ENCODE measurements at regions of chr7 and their contacts with region 1.

Region 1: DNA sequence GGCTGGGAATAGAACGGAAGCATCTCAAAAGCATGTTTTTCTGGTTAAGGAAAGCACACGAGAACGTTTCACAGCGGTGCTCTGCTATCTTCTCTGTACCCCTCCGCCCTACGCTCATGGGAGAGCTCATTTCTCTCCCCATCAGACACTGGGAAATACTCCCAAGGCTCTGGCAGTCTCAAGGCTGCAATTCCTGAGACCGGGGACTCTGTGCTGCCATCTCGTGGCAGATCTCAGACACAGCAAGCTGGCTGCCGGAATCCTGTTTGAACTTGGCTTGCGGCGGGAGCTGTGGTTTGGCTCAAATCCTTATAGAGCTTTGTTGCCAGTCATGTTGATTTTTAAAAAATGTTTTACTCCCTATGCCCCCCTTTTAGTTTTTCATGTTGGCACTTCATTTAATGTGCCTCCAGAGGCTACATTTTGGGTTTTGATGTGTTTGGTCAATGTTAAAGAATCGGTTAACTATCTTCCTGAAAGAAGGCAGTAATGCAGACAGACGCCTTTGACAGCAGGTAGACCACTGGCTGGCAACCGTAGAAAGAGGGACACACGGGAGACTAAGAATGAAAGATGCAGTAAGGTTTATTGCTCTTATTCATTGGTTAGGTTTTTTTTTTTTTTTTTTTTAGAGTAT is 27.6 kb downstream of the BMPER start:
- DNase-seq: peak in 1 of 2 donors; percentile 90
- H3K4me3 ChIP-seq: peak overlapping the region in 1 of 2 donors; percentile 13
- H3K27ac ChIP-seq: peak overlapping the region; percentile 4
- H3K4me1 ChIP-seq: peaks cover 17% of the 10 kb centered on the region
- H3K27me3 ChIP-seq: no peaks in the 10 kb centered on the region
- CTCF ChIP-seq: peak; percentile 83 to 94 (median 92)
- POLR2A ChIP-seq: no peak

Region 2: GRCh38 chr7:33774762-33775523 is 158.0 kb before region 1 on chr7:
- intact Hi-C with region 1: loop called (anchors 5 kb)
- DNase-seq: peak in 1 of 2 donors; percentile 72
- H3K4me3 ChIP-seq: no peak overlapping the region
- H3K27ac ChIP-seq: no peak overlapping the region
- H3K4me1 ChIP-seq: no peaks in the 10 kb centered on the region
- H3K27me3 ChIP-seq: no peaks in the 10 kb centered on the region
- CTCF ChIP-seq: no peak
- POLR2A ChIP-seq: no peak

Region 3: GRCh38 chr7:33904681-33905388 is 28.1 kb before region 1 on chr7:
- intact Hi-C with region 1: no loop called
- DNase-seq: no peak
- H3K4me3 ChIP-seq: peak overlapping the region; percentile 56 to 87
- H3K27ac ChIP-seq: peak overlapping the region; percentile 79
- H3K4me1 ChIP-seq: peaks cover 13% of the 10 kb centered on the region
- H3K27me3 ChIP-seq: no peaks in the 10 kb centered on the region
- CTCF ChIP-seq: no peak
- POLR2A ChIP-seq: no peak

Region 4: GRCh38 chr7:33986941-33987588 is 54.1 kb after region 1 on chr7:
- intact Hi-C with region 1: no loop called
- DNase-seq: no peak
- H3K4me3 ChIP-seq: no peak overlapping the region
- H3K27ac ChIP-seq: peak overlapping the region; percentile 73
- H3K4me1 ChIP-seq: no peaks in the 10 kb centered on the region
- H3K27me3 ChIP-seq: no peaks in the 10 kb centered on the region
- CTCF ChIP-seq: no peak
- POLR2A ChIP-seq: no peak

Region 5: DNA sequence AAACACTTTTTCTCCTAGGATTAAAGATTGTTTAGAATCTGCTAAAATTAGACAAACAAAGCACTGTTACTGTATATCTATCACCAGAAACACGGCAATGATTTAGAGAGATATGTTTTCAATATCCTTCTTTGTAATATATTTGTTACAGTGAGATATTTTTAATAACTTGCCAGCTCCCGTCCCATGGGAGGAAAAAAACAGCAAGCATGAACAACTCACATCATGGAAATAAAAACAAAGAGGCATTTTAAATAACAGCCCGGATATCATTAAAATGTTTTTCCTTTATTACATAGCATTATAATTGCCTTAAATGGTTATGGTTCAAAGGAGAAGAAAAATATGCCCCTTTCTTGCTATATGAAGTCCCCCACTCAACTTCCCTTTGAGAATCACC is 244.5 kb after region 1 on chr7:
- intact Hi-C with region 1: no loop called
- DNase-seq: no peak
- H3K4me3 ChIP-seq: no peak overlapping the region
- H3K27ac ChIP-seq: no peak overlapping the region
- H3K4me1 ChIP-seq: no peaks in the 10 kb centered on the region
- H3K27me3 ChIP-seq: no peaks in the 10 kb centered on the region
- CTCF ChIP-seq: no peak
- POLR2A ChIP-seq: no peak